CD8-positive, alpha-beta T cell (primary cell): ENCODE measurements at regions of chr10 and their contacts with region 1.

Region 1: DNA sequence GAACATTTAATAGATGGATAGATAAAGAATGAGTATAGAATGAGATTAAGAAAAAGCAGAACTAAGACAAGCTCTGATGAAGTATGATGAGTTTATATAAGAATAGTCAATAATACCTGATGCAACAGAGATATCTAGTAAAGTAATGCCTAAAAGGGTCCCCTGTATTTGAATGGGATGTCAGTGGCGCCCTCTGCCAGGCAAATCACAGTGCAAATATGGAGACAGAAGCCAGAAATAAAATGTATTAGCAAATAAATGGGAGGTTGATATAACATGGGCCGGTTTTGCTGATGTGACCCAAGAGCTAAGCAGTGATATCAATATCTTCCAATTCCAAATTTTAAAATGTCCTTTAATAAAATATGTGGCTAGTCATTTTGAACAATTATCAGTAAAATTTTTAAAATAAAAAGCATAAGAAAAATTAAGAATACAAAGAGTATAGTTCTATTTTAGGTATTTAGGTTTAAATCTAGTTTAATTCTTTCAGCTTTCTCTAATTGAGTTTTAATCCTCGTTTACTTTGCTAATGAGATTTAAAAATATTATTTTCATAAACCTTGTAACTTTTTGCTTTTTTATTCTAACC is 62.6 kb downstream of the ADK start:
- DNase-seq: peak; percentile 20 to 70 (median 56)
- ATAC-seq: peak; percentile 46
- H3K4me3 ChIP-seq: no peak overlapping the region
- H3K4me3 Mint-ChIP-seq: no peak overlapping the region
- H3K27ac ChIP-seq: no peak overlapping the region
- H3K27ac Mint-ChIP-seq: no peak overlapping the region
- H3K4me1 ChIP-seq: no peaks in the 10 kb centered on the region
- H3K4me1 Mint-ChIP-seq: peaks cover 20% of the 10 kb centered on the region
- H3K27me3 ChIP-seq: no peaks in the 10 kb centered on the region
- H3K27me3 Mint-ChIP-seq: no peaks in the 10 kb centered on the region
- CTCF ChIP-seq: peak; percentile 51

Region 2: GRCh38 chr10:72772031-72772430 is 1441.6 kb before region 1 on chr10:
- CTCF ChIA-PET with region 1: no interaction called
- POLR2A ChIA-PET with region 1: no interaction called
- intact Hi-C with region 1: no loop called
- DNase-seq: no peak
- ATAC-seq: no peak
- H3K4me3 ChIP-seq: no peak overlapping the region
- H3K4me3 Mint-ChIP-seq: no peak overlapping the region
- H3K27ac ChIP-seq: no peak overlapping the region
- H3K27ac Mint-ChIP-seq: no peak overlapping the region
- H3K4me1 ChIP-seq: no peaks in the 10 kb centered on the region
- H3K4me1 Mint-ChIP-seq: peaks cover 13% of the 10 kb centered on the region
- H3K27me3 ChIP-seq: no peaks in the 10 kb centered on the region
- H3K27me3 Mint-ChIP-seq: no peaks in the 10 kb centered on the region
- CTCF ChIP-seq: no peak

Region 3: GRCh38 chr10:73920089-73920488 is 293.6 kb before region 1 on chr10:
- CTCF ChIA-PET with region 1: no interaction called
- POLR2A ChIA-PET with region 1: no interaction called
- intact Hi-C with region 1: no loop called
- DNase-seq: peak in 1 of 9 experiments; percentile 27
- ATAC-seq: no peak
- H3K4me3 ChIP-seq: no peak overlapping the region
- H3K4me3 Mint-ChIP-seq: no peak overlapping the region
- H3K27ac ChIP-seq: no peak overlapping the region
- H3K27ac Mint-ChIP-seq: no peak overlapping the region
- H3K4me1 ChIP-seq: peaks cover 29% of the 10 kb centered on the region
- H3K4me1 Mint-ChIP-seq: peaks cover 23% of the 10 kb centered on the region
- H3K27me3 ChIP-seq: peaks cover 3 to 12% of the 10 kb centered on the region in 2 experiments
- H3K27me3 Mint-ChIP-seq: peaks cover 39% of the 10 kb centered on the region
- CTCF ChIP-seq: no peak

Region 4: GRCh38 chr10:74156919-74157289 is 56.8 kb before region 1 on chr10:
- CTCF ChIA-PET with region 1: interaction called, 11 read pairs
- POLR2A ChIA-PET with region 1: no interaction called
- intact Hi-C with region 1: loop called (anchors 5 kb)
- DNase-seq: no peak
- ATAC-seq: no peak
- H3K4me3 ChIP-seq: no peak overlapping the region
- H3K4me3 Mint-ChIP-seq: no peak overlapping the region
- H3K27ac ChIP-seq: no peak overlapping the region
- H3K27ac Mint-ChIP-seq: no peak overlapping the region
- H3K4me1 ChIP-seq: peaks cover 14% of the 10 kb centered on the region
- H3K4me1 Mint-ChIP-seq: peaks cover 34% of the 10 kb centered on the region
- H3K27me3 ChIP-seq: no peaks in the 10 kb centered on the region
- H3K27me3 Mint-ChIP-seq: no peaks in the 10 kb centered on the region
- CTCF ChIP-seq: no peak

Region 5: DNA sequence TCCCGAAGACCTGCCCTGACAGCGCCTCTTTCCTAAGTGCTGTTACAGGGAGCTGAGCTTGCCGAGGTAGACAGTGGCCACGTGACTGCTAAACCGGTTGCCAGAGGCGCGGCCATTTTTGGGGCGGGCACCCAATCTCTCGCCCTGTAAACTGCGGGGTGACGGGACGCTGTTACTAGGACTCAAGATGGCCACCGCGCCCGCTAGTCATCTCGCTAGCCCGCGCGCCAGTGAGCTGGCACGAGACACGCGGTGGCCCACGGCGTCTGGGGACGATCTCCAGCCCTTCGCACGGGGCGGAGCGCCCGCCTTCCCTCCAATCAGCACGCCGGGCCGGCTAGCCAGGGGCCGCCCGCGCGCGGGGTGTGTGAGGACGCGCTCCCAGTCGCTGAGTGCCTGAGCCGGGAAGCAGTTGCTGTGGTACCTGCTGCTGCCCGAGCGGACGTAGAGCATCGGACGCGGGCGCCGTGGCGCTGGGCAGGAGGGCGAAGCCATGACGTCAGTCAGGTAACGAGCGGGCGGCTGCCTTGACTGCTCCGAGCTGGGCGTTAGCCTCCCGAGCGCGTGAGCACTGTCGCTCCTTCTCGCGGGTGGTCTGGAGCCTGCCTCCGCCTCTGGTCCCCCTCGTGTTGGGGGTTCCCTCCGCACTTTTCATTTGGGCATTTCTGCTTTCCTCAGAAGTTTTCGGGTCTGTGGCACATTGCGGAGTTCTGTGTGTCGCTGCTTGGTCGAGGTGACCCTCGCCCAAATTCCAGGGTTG is 37.1 kb before region 1 on chr10:
- CTCF ChIA-PET with region 1: interaction called, 4 read pairs
- POLR2A ChIA-PET with region 1: interaction called, 7 read pairs
- intact Hi-C with region 1: loop called (anchors 1 to 5 kb)
- DNase-seq: peak; percentile 89 to 99 (median 96)
- ATAC-seq: peak; percentile 93
- H3K4me3 ChIP-seq: peak overlapping the region; percentile 89 to 91
- H3K4me3 Mint-ChIP-seq: peak overlapping the region; percentile 93
- H3K27ac ChIP-seq: peak overlapping the region; percentile 85 to 89
- H3K27ac Mint-ChIP-seq: peak overlapping the region; percentile 97
- H3K4me1 ChIP-seq: peaks cover 34% of the 10 kb centered on the region
- H3K4me1 Mint-ChIP-seq: peaks cover 42% of the 10 kb centered on the region
- H3K27me3 ChIP-seq: no peaks in the 10 kb centered on the region
- H3K27me3 Mint-ChIP-seq: no peaks in the 10 kb centered on the region
- CTCF ChIP-seq: no peak

Region 6: DNA sequence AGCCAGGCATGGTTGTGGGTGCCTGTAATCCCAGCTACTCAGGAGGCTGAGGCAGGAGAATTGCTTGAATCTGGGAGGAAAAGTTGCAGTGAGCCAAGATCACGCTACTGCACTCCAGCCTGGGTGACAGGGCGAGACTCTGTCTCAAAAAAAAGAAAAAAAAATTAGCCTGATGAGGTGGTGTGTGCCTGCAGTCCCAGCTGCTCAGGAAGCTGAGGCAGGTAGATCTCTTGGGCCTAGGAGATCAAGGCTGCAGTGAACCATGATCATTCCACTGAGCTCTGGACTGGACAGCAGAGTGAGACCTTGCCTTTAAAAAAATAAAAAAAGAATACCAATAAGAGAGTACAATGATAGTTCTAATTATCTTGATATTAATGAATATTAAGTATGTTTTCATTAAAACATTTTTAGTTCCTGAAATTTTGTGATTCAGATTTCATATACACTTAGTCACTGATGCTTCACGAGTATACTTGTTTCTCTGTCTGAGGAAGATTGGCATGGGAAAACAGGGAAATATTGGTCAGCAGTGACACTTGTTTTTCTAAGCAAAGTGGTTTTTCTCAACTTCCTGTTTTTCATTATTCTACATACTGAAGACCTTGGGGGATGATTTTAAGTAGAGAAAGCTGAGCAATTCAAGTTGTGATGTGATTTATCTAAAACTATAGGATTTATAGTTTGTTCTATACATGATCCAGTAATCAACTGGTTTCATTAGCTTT is 14.2 kb after region 1 on chr10:
- CTCF ChIA-PET with region 1: interaction called, 14 read pairs
- POLR2A ChIA-PET with region 1: interaction called, 5 read pairs
- intact Hi-C with region 1: no loop called
- DNase-seq: peak in 4 of 9 experiments; percentile 22 to 58 (median 43)
- ATAC-seq: peak; percentile 78
- H3K4me3 ChIP-seq: no peak overlapping the region
- H3K4me3 Mint-ChIP-seq: peak overlapping the region; percentile 55
- H3K27ac ChIP-seq: peak overlapping the region; percentile 38 to 69
- H3K27ac Mint-ChIP-seq: peak overlapping the region; percentile 94
- H3K4me1 ChIP-seq: peaks cover 17% of the 10 kb centered on the region
- H3K4me1 Mint-ChIP-seq: peaks cover 37% of the 10 kb centered on the region
- H3K27me3 ChIP-seq: no peaks in the 10 kb centered on the region
- H3K27me3 Mint-ChIP-seq: no peaks in the 10 kb centered on the region
- CTCF ChIP-seq: no peak

Region 7: GRCh38 chr10:74234569-74234968 is 20.9 kb after region 1 on chr10:
- CTCF ChIA-PET with region 1: interaction called, 14 read pairs
- POLR2A ChIA-PET with region 1: interaction called, 3 read pairs
- intact Hi-C with region 1: no loop called
- DNase-seq: peak in 1 of 9 experiments; percentile 29
- ATAC-seq: no peak
- H3K4me3 ChIP-seq: no peak overlapping the region
- H3K4me3 Mint-ChIP-seq: no peak overlapping the region
- H3K27ac ChIP-seq: no peak overlapping the region
- H3K27ac Mint-ChIP-seq: no peak overlapping the region
- H3K4me1 ChIP-seq: no peaks in the 10 kb centered on the region
- H3K4me1 Mint-ChIP-seq: peaks cover 8% of the 10 kb centered on the region
- H3K27me3 ChIP-seq: no peaks in the 10 kb centered on the region
- H3K27me3 Mint-ChIP-seq: no peaks in the 10 kb centered on the region
- CTCF ChIP-seq: peak; percentile 73

Region 8: GRCh38 chr10:74244097-74244685 is 30.5 kb after region 1 on chr10:
- CTCF ChIA-PET with region 1: interaction called, 11 read pairs
- POLR2A ChIA-PET with region 1: no interaction called
- intact Hi-C with region 1: no loop called
- DNase-seq: peak in 3 of 9 experiments; percentile 26 to 68 (median 60)
- ATAC-seq: no peak
- H3K4me3 ChIP-seq: no peak overlapping the region
- H3K4me3 Mint-ChIP-seq: no peak overlapping the region
- H3K27ac ChIP-seq: no peak overlapping the region
- H3K27ac Mint-ChIP-seq: no peak overlapping the region
- H3K4me1 ChIP-seq: no peaks in the 10 kb centered on the region
- H3K4me1 Mint-ChIP-seq: peaks cover 2% of the 10 kb centered on the region
- H3K27me3 ChIP-seq: no peaks in the 10 kb centered on the region
- H3K27me3 Mint-ChIP-seq: no peaks in the 10 kb centered on the region
- CTCF ChIP-seq: peak; percentile 73

Region 9: DNA sequence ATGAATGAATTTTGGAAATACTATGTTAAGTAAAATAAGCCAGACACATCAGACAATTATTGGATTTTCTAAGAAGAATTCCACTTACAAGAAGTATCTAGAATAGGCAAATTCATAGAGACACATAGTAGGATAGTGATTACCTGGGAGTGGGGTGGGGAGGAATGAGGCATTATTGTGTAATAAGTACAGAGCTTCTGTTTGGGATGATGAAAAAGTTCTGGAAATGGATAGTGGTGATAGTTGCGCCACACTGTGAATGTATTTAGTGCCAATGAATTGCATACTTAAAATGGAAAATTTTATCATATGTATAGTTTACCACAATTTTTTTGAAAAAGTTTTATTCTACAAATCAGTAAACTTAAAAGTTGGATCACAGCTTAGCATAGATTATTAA is 315.5 kb after region 1 on chr10:
- CTCF ChIA-PET with region 1: no interaction called
- POLR2A ChIA-PET with region 1: no interaction called
- intact Hi-C with region 1: no loop called
- DNase-seq: no peak
- ATAC-seq: no peak
- H3K4me3 ChIP-seq: no peak overlapping the region
- H3K4me3 Mint-ChIP-seq: no peak overlapping the region
- H3K27ac ChIP-seq: no peak overlapping the region
- H3K27ac Mint-ChIP-seq: no peak overlapping the region
- H3K4me1 ChIP-seq: no peaks in the 10 kb centered on the region
- H3K4me1 Mint-ChIP-seq: no peaks in the 10 kb centered on the region
- H3K27me3 ChIP-seq: no peaks in the 10 kb centered on the region
- H3K27me3 Mint-ChIP-seq: no peaks in the 10 kb centered on the region
- CTCF ChIP-seq: no peak